Esophagus muscularis mucosa (tissue), 4 donors: ENCODE measurements at regions of chr1 and their contacts with region 1.

Region 1: DNA sequence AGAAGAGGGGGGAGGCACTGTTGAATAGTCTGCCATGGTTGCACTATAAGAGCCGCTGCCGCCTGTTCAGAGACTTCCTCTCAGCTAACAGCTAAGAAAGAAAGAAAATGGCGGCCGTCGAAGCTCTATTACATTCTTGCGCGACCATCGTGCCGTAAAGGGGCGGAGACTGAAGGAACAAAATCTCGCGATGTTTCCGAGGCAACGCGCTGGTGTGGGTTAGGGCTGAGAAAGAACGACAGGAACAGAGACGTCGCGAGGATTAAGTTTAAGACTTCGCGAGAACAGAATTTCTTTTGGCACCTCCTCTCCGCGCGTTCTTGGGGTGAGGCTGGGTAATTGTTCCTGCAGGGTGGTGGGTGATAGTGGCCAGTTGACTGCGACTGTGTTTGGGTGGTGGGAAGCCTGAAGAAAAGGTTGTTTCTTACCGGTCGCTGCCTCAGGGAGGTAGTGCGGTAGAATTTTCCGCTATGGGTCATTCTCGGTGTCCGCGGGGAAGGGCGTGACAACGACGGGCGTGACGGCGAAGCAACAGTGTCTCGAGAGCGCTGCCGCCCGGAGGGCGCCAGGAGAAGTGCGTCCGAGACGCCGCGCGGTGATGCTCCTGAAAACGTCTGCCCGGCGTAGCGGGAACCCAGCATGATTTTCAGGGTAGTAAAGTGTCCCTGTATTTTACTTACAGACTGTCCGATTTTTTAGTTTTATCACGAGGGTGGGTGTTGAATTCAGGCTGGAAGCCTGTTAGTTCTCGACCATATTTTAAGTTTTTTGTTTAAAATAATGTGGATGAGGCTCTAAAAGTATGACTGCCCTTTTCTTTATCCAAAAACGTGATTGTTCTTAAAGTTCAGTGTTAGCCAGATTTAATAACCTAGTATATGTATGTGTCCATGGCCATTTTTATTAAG is at the start of gene FUBP1:
- DNase-seq: peak; percentile 99
- H3K4me3 ChIP-seq: peak within 1 kb of the TSS; percentile 63 to 85 (median 71)
- H3K27ac ChIP-seq: peak within 1 kb of the TSS; percentile 89 to 97 (median 95)
- H3K4me1 ChIP-seq: peaks cover 35 to 62% (median 51%) of the 10 kb centered on the region in 4 donors
- H3K27me3 ChIP-seq: no peaks in the 10 kb centered on the region
- CTCF ChIP-seq: peak; percentile 55 to 84 (median 65)
- EP300 ChIP-seq: no peak
- POLR2A ChIP-seq: peak; percentile 31
- total RNA-seq, gene FUBP1: 48.2 to 86.8 (median 51.1) TPM

Region 2: DNA sequence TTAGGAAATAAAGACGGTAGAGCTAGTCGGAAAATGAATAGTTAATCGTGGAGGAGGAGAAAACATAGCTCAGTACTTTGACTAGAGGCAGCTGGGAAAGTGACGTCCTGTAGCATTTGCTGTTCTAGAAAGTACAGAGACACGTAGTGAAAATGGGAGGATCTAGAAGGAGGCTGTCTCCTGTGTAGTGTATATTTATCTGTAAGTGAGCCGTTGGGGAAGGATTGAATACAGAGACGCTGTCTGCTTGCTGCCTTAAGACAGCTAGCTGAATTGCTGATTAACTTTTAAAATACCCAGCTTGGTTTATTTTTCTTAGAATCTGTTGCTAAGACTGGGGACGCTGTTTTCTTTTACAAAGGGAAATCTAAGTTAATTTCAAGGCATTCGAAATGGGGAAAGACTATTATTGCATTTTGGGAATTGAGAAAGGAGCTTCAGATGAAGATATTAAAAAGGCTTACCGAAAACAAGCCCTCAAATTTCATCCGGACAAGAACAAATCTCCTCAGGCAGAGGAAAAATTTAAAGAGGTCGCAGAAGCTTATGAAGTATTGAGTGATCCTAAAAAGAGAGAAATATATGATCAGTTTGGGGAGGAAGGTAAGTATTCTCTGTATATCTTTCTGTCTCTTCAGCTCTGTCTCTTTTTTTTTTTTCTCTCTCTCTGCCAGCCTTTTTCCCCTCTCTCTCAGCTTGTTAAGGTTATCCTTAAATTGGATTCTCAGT is 25.7 kb after region 1 on chr1 and contains the start of gene DNAJB4:
- intact Hi-C with region 1: loop called (anchors 2 kb)
- DNase-seq: peak; percentile 92
- H3K4me3 ChIP-seq: peak within 1 kb of the TSS; percentile 62 to 68 (median 68)
- H3K27ac ChIP-seq: peak within 1 kb of the TSS; percentile 88 to 93 (median 89)
- H3K4me1 ChIP-seq: peaks cover 12 to 42% (median 36%) of the 10 kb centered on the region in 4 donors
- H3K27me3 ChIP-seq: no peaks in the 10 kb centered on the region
- CTCF ChIP-seq: peak in 1 of 3 experiments; percentile 10
- EP300 ChIP-seq: no peak
- POLR2A ChIP-seq: peak; percentile 91
- total RNA-seq, gene DNAJB4: 62.6 to 79.7 (median 70.4) TPM

Region 3: DNA sequence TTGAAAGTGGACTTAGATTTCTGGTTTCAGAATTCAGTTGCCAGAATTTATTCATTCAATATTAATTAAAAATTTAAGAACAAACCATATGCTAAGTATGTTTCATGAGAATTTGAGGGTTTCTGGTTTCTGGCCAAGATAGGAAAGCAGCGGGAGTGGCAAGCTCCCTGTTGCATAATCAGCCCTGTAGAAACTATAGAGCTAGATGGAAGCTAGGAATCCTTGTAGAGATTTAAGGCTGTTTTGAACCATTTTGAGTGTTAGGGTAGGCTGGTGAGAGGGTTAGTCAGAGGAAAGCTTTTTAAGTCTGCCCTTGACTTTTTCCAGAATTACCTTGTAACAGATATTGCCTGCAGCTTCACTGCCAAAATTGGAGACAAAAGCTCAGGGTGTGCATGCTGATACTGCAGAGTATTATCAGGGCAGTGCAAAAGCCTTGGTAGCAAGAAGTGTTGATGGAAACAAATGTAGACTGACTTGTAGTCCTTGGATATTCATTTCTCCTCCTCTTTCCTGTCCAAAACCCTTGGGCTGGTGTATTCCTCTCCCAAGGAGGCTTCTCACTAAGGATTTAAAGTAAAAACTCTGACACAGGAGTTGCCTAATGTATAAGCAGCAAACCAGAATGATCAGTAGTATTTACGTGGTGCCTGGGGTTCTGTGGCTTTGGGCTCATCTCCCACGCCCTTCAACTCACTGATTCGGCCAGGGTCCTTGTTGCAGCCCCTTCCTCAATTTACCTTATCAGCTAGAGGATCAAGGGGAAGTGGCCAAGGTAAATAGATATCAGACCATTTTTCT is 54.0 kb after region 1 on chr1:
- intact Hi-C with region 1: no loop called
- DNase-seq: no peak
- H3K4me3 ChIP-seq: no peak overlapping the region
- H3K27ac ChIP-seq: peak overlapping the region in 3 of 4 donors; percentile 2 to 43 (median 15)
- H3K4me1 ChIP-seq: peaks cover 4 to 20% (median 16%) of the 10 kb centered on the region in 4 donors
- H3K27me3 ChIP-seq: no peaks in the 10 kb centered on the region
- CTCF ChIP-seq: no peak
- EP300 ChIP-seq: no peak
- POLR2A ChIP-seq: no peak

Region 4: DNA sequence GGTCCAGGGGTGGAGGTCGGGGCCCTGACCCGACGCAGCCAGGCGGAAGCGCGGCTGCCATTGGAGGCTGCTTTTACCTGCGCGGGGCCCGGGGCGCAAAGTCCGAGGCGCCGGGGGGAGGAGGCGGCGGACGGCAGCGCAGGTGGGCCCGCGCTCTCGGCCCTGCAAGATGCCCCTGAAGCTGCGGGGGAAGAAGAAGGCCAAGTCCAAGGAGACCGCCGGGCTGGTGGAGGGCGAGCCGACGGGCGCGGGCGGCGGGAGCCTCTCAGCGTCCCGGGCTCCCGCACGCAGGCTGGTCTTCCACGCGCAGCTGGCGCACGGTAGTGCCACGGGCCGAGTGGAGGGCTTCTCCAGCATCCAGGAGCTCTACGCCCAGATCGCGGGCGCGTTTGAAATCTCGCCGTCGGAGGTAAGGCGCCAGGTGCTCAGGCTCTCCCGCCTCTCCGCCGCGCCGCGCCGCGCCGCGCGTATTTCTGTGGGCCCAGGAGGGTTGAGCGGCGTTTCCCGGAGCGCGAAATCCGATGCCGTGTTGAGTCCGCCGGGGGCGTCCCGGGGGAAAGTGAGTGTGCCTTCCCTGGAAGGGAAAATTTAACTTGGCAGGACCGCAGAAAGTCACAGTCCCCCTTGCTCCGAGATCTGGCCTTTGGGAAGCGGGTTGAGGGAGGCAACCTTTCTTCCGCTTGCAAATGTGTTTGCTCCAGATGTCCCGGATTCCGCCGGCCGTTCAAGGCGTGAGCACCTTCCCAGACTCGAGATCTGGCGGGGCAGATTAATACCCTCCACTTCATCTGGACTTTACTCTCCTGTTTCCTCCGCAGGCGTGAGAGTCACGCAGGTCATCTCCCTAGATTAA is 66.9 kb after region 1 on chr1 and contains the start of gene GIPC2:
- intact Hi-C with region 1: loop called (anchors 2 kb)
- DNase-seq: no peak
- H3K4me3 ChIP-seq: peak within 1 kb of the TSS; percentile 72 to 79 (median 76)
- H3K27ac ChIP-seq: peak within 1 kb of the TSS; percentile 79 to 88 (median 86)
- H3K4me1 ChIP-seq: peaks cover 6 to 65% (median 54%) of the 10 kb centered on the region in 4 donors
- H3K27me3 ChIP-seq: no peaks in the 10 kb centered on the region
- CTCF ChIP-seq: no peak
- EP300 ChIP-seq: no peak
- POLR2A ChIP-seq: no peak
- total RNA-seq, gene GIPC2: 4.5 to 8.7 (median 6.8) TPM

Region 5: DNA sequence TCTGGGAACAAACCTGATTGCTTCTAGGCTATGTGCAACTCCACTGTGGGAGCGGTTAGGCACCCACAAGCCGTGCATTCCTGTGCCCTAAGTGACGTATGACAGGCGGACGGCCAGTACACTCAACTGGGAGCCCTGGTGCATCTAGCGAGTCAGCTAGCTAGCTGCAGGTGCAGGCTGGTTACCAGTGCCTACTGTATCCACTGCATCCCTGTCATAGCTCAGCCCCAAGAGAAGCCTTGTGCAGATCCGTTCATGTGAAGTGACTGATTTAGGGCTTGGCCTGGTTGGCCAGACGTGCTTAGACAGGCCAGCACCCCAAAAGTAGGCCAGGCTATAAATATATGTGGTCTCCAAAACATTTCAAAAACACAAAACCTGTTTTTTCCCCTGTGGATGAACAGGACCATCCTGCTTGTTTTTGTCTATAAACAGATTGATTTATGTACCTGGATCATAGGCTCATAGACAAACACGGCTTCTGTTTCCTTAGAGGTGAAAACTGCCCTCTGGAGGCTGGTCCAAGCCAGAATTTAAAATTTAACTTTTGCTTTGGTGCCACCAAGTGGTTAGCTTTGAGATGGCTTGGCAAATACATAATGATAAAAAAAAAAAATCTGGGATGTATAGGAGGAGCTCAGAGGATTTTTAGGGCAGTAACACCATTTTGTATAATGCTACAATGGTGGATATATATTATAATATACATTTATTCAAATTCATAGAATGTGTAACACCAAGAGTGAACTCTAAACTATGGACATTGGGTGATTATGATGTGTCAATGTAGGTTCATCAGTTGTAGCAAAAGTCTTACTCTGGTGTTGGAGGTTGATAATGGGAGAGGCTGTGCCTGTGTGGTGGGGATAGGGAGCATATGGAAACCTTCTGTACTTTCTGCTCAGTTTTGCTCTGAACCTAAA is 135.1 kb after region 1 on chr1:
- intact Hi-C with region 1: loop called (anchors 5 kb)
- DNase-seq: no peak
- H3K4me3 ChIP-seq: no peak overlapping the region
- H3K27ac ChIP-seq: peak overlapping the region; percentile 17 to 54 (median 36)
- H3K4me1 ChIP-seq: peaks cover 5 to 9% (median 7%) of the 10 kb centered on the region in 4 donors
- H3K27me3 ChIP-seq: no peaks in the 10 kb centered on the region
- CTCF ChIP-seq: peak; percentile 88 to 97 (median 89)
- EP300 ChIP-seq: no peak
- POLR2A ChIP-seq: no peak

Region 6: DNA sequence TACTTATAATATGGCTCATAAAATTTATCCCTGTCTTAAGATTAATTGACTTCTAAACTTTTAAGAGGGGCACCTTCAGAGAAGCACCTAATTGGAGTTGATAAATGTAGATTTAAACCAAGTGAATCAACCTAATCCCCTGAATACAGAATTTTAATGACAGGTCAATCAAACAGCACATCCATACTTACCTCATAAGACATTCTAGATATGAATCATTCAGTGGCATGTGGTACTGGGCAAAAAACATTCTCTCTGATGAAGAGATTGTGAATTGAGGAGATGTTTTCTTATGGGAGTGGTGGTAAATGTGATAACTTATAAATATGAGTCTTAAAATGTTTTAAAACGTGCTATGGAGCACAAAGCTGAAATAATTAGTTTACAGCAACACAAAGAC is 344.1 kb after region 1 on chr1:
- intact Hi-C with region 1: no loop called
- DNase-seq: no peak
- H3K4me3 ChIP-seq: no peak overlapping the region
- H3K27ac ChIP-seq: no peak overlapping the region
- H3K4me1 ChIP-seq: no peaks in the 10 kb centered on the region
- H3K27me3 ChIP-seq: no peaks in the 10 kb centered on the region
- CTCF ChIP-seq: no peak
- EP300 ChIP-seq: no peak
- POLR2A ChIP-seq: no peak

Region 7: DNA sequence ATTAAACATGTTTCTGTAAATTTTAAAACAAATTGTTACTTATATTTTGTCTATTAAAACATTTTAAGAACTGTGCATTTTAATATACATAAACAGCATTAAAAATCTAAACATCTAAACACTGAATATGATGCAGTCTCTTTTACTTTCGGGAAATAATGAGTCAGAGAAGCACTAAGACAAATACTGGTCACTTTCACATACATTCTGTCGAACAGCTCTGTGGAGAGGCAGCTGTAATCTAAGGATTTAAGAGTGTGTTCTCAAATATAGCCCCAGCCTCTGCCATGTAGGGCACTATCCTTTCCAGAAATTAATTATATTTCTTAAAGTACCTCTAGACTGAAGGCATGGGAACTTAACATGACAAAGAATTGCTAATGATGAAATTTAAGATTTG is 421.9 kb after region 1 on chr1:
- intact Hi-C with region 1: no loop called
- DNase-seq: no peak
- H3K4me3 ChIP-seq: no peak overlapping the region
- H3K27ac ChIP-seq: no peak overlapping the region
- H3K4me1 ChIP-seq: no peaks in the 10 kb centered on the region
- H3K27me3 ChIP-seq: no peaks in the 10 kb centered on the region
- CTCF ChIP-seq: no peak
- EP300 ChIP-seq: no peak
- POLR2A ChIP-seq: no peak